ENCODE measurements at regions of chr6 and their contacts with region 1.

Region 1: GRCh38 chr6:126361832-126362412 is 22.0 kb downstream of the CENPW start:
- DNase-seq: no peak
- H3K4me3 ChIP-seq: no peak overlapping the region
- H3K27ac ChIP-seq: no peak overlapping the region
- H3K4me1 ChIP-seq: no peaks in the 10 kb centered on the region
- H3K27me3 ChIP-seq: no peaks in the 10 kb centered on the region
- CTCF ChIP-seq: no peak

Region 2: GRCh38 chr6:126657561-126658175 is 295.7 kb after region 1 on chr6:
- intact Hi-C with region 1: loop called (anchors 5 kb)
- DNase-seq: peak; percentile 36
- H3K4me3 ChIP-seq: no peak overlapping the region
- H3K27ac ChIP-seq: no peak overlapping the region
- H3K4me1 ChIP-seq: no peaks in the 10 kb centered on the region
- H3K27me3 ChIP-seq: no peaks in the 10 kb centered on the region
- CTCF ChIP-seq: peak; percentile 46

Region 3: DNA sequence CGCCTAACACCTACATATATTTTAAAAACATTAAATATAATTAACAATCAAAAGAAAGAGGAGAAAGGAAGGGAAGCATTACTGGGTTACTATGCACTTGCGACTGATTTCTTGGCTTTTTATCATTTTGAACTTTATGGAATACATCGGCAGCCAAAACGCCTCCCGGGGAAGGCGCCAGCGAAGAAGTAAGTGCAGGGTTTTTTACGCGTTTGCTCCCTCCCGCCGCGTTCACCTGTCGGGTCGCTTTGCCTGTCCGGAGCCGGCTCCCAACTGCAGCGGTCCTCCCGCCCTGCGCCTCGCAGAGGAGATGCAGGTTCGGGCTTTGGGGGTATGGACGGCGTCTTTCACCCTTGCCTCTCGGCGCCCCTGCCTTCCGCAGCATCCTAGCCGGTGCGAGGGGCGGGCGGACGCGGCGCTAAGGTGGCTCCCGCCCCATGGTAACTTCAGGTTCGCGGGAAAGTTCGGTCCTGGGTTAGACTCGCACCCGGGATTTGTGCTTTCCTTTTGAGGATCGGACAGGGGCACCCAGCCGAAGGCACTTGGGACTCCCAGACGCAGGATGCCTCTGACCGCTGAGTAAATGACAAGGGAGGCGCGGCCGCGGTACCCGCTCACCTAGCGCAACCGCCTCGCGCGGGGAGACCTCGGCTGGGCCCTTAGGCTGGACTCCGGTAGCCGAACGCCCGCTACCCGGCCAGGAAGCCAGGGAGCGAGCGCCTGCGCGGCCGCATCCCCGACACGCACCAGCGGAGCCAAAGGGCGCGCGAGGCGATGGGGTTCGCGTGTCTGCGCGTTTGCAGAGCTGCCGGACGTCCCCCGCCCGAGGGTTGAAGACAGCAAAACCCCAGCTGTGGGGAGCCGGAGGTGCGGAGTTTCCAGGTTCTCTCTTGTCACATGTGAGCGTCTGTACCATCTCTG is 757.4 kb after region 1 on chr6:
- intact Hi-C with region 1: loop called (anchors 10 kb)
- DNase-seq: no peak
- H3K4me3 ChIP-seq: peak overlapping the region; percentile 31
- H3K27ac ChIP-seq: peak overlapping the region; percentile 17
- H3K4me1 ChIP-seq: no peaks in the 10 kb centered on the region
- H3K27me3 ChIP-seq: peaks cover 30% of the 10 kb centered on the region
- CTCF ChIP-seq: no peak

Measured in colonic mucosa (tissue), 4 donors.